Kidney (tissue), 22 donors: ENCODE measurements at regions of chr14 and their contacts with region 1.

Region 1: GRCh38 chr14:65412032-65412846 is at the start of gene FUT8:
- DNase-seq: peak; percentile 96 to 99 (median 96)
- H3K4me3 ChIP-seq: peak within 1 kb of the TSS; percentile 61 to 93 (median 74)
- H3K27ac ChIP-seq: peak within 1 kb of the TSS; percentile 91 to 93
- H3K4me1 ChIP-seq: peaks cover 0 to 4% (median 3%) of the 10 kb centered on the region in 3 donors
- H3K27me3 ChIP-seq: no peaks in the 10 kb centered on the region
- CTCF ChIP-seq: peak; percentile 40
- total RNA-seq, gene FUT8: 49.6 TPM

Region 2: GRCh38 chr14:65153101-65153500 is 259.1 kb before region 1 on chr14:
- intact Hi-C with region 1: no loop called
- DNase-seq: no peak
- H3K4me3 ChIP-seq: no peak overlapping the region
- H3K27ac ChIP-seq: no peak overlapping the region
- H3K4me1 ChIP-seq: no peaks in the 10 kb centered on the region
- H3K27me3 ChIP-seq: no peaks in the 10 kb centered on the region
- CTCF ChIP-seq: no peak

Region 3: DNA sequence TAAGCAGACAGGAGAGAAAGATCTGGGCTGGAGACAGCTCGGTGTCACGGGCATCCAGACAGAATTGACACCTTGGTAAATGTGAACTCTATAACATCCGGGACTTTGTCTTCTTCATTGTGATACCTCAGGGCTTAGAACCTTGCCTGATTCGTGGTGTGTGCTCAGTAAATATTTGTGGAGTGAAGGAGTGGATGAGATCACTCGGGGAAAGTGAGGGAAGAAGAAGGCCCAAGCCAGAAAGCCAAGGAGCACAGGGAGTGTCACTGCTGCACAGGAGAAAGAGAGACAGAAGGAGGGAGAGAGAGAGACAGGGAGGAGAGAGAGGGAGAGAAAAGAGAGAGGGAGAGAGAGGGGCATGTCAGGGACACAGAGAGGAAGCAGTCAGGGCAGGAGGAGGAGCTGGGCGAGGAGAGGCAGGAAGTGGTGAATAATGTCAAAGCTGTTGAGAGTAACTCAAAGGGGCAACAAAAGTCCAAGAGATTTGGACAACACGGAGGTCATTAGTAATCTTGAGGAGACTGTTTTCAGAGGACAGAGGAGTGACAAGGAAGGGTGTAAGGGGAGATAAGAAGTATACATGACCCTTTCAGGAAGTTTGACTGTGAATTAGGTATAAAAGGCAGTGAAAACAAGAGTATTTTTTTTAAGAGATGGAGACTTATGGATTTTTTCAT is 168.3 kb before region 1 on chr14:
- intact Hi-C with region 1: no loop called
- DNase-seq: no peak
- H3K4me3 ChIP-seq: no peak overlapping the region
- H3K27ac ChIP-seq: no peak overlapping the region
- H3K4me1 ChIP-seq: no peaks in the 10 kb centered on the region
- H3K27me3 ChIP-seq: no peaks in the 10 kb centered on the region
- CTCF ChIP-seq: no peak

Region 4: DNA sequence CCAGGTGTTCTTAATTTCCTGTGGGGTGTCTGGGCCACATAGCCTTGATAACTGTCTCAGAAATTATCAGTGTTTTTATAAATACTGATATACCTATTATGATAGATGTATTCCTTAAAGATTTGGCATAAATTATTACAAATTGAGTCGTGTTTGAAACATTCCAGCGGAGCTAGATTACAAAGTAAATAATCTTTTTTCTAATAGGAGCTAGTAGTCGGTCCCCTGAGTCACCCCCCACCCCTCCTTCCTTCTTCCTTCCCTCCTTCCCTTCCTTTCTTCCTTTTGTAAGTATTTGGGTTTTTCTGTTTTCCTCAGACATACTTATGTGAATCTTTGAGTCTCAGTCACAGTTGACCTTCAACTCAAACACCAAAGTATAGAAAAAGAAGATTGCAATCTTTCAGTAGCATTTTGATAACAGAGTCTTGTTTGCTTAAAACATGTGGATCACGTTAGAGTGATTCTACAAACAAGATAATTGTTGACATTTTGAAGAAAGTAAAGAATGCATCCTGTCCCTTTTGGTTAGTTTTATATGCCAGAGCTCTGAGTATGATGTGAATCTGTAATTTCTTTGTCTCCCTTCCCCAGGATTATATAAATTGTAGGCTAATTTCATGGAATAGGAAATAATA is 264.2 kb after region 1 on chr14:
- intact Hi-C with region 1: no loop called
- DNase-seq: no peak
- H3K4me3 ChIP-seq: no peak overlapping the region
- H3K27ac ChIP-seq: no peak overlapping the region
- H3K4me1 ChIP-seq: no peaks in the 10 kb centered on the region
- H3K27me3 ChIP-seq: no peaks in the 10 kb centered on the region
- CTCF ChIP-seq: no peak

Region 5: DNA sequence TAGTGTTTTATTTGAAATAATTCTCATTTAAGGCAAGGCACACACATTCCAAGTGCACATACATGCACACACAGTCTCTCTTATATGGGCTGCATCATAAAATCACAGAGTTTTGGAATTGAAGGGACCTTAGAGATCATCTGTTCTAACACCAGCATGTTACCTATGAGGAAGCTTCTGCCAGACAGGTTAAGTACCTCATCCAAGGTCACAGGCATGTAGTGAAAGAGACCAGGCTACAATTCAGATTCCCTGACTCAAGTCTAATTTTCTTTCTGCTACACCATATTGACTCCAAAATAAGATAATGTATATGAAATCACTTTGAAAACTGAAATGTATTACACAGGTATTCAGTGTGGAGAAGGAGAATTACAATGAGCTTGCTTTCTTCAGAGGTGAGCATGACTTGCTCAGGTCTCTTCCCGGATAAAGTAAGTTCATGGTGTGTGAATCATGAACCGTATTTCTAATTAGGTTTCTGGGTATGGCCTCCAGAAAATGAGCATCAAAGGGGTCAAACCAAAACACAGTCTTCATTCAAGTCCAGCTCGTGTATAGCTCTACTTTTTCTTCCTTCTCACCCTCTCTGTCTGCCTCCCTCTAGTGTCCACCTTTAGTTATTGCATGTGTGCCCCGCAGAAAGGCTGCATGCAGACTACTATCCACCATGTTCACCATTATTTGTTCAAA is 412.2 kb after region 1 on chr14:
- intact Hi-C with region 1: loop called (anchors 10 kb)
- DNase-seq: peak in 3 of 5 donors; percentile 45 to 72 (median 71)
- H3K4me3 ChIP-seq: no peak overlapping the region
- H3K27ac ChIP-seq: no peak overlapping the region
- H3K4me1 ChIP-seq: no peaks in the 10 kb centered on the region
- H3K27me3 ChIP-seq: no peaks in the 10 kb centered on the region
- CTCF ChIP-seq: peak; percentile 93